ENCODE measurements at regions of chrX and their contacts with region 1.

Region 1: DNA sequence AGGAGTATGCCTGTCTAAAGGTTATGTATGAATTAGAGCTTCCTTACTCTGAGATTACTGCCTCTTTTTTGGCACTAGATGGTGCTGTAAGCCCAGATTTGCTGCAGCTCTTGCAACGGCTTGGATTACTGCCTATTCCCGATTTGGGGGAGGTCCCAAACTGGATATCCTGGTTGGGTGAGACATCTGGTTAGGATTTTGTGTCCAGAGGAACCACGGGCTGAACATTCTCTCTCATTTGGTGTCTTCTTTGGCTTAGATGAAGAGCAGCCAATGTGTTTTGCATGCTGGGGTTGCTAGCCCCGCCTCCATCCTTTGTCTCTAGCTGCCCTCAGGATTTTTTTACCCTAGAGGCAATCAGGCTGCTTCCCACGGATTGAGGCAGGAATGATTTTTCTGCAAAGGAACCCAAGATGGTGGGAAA is 31.9 kb downstream of the F8A1 start:
- DNase-seq: peak; percentile 46
- ATAC-seq: peak; percentile 57
- H3K4me3 Mint-ChIP-seq: peak overlapping the region; percentile 44
- H3K27ac Mint-ChIP-seq: no peak overlapping the region
- H3K4me1 Mint-ChIP-seq: no peaks in the 10 kb centered on the region
- H3K27me3 Mint-ChIP-seq: peaks cover 3% of the 10 kb centered on the region

Region 2: DNA sequence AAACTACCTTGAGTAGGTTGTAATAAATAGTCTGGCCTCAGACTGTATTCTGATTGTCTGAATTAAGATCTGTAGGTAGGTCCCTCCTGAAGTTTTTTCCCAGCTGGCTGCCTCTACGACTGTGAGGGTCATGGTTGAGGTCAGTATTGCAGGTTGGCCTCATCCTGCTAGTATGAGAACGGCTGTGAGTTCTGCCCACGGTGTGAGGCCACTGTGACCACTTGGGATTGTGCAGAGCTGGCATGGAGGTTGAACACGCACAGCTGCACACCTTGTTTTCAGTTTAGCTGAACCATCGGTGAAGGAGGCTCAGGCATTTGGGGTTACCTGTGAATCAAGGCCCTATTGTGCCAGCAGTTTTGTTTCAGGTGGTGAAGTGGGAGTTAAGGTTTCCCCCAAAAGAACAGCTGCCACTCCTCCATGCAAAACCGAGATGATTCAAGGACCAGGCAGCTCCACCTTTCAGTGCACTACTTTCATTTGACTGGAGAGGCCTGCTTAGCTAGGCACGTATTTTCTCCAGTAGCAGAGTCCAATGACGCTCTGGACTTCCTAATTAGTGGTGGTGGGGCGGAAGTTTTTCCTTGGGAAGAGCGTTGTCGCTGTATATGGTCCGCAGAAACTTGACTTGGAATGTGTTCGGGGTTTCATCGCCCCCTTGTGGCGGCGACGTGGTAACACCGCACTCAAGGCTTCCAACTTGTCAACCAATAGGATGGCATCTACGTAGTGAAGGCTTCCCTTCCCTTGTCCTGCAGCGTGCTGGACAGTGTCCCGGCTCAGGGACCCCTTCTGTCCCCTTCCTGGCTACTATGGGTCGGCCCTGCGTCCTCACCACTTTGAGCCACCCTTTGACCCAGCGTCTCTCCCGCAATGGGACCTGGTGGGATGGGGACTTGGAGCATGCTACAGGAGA is 139.1 kb after region 1 on chrX:
- CTCF ChIA-PET with region 1: interaction called, 10 read pairs
- POLR2A ChIA-PET with region 1: no interaction called
- intact Hi-C with region 1: loop called in 1 of 2 experiments (anchors 2 kb)
- DNase-seq: peak; percentile 63
- ATAC-seq: peak; percentile 82
- H3K4me3 Mint-ChIP-seq: peak overlapping the region; percentile 21
- H3K27ac Mint-ChIP-seq: peak overlapping the region; percentile 25
- H3K4me1 Mint-ChIP-seq: peaks cover 33% of the 10 kb centered on the region
- H3K27me3 Mint-ChIP-seq: no peaks in the 10 kb centered on the region

Region 3: DNA sequence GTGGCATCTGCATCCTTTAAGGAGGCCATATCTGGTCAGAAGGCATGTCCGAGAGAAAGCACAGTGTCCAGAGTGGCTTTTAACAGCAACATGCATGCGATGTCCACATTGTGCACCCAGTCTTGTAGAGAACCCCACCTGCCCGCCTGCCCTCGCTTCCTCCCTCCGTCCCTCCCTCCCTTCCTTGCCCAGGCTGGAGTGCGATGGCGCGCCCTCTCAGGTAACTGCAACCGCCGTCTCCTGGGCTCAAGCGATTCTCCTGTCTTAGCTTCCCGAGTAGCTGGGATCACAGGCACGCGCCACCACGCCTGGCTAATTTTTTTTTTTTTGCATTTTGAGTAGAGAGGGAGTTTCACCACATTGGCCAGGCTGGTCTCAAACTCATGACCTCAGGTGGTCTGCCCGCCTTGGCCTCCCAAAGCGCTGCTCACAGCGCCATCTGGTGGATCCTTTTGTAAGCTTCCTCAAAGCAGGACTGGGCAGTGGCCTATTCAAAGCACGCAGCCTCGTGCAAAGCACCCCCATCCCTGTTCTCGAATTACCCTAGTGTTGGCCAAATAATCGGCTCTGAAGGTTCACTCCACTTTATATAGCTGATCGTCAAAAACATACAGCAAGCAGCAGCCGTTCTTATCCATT is 168.2 kb after region 1 on chrX:
- CTCF ChIA-PET with region 1: interaction called, 3 read pairs
- POLR2A ChIA-PET with region 1: interaction called, 4 read pairs
- intact Hi-C with region 1: loop called in 1 of 2 experiments (anchors 1 kb)
- DNase-seq: peak; percentile 63
- ATAC-seq: no peak
- H3K4me3 Mint-ChIP-seq: no peak overlapping the region
- H3K27ac Mint-ChIP-seq: no peak overlapping the region
- H3K4me1 Mint-ChIP-seq: peaks cover 2% of the 10 kb centered on the region
- H3K27me3 Mint-ChIP-seq: no peaks in the 10 kb centered on the region

Region 4: GRCh38 chrX:155132110-155132509 is 214.0 kb after region 1 on chrX:
- CTCF ChIA-PET with region 1: interaction called, 4 read pairs
- POLR2A ChIA-PET with region 1: no interaction called
- intact Hi-C with region 1: loop called in 1 of 2 experiments (anchors 2 kb)
- DNase-seq: no peak
- ATAC-seq: no peak
- H3K4me3 Mint-ChIP-seq: no peak overlapping the region
- H3K27ac Mint-ChIP-seq: no peak overlapping the region
- H3K4me1 Mint-ChIP-seq: no peaks in the 10 kb centered on the region
- H3K27me3 Mint-ChIP-seq: no peaks in the 10 kb centered on the region

Region 5: GRCh38 chrX:155148724-155149537 is 230.9 kb after region 1 on chrX:
- CTCF ChIA-PET with region 1: interaction called, 6 read pairs
- POLR2A ChIA-PET with region 1: no interaction called
- intact Hi-C with region 1: loop called (anchors 1 to 10 kb)
- DNase-seq: peak; percentile 51
- ATAC-seq: peak; percentile 47
- H3K4me3 Mint-ChIP-seq: no peak overlapping the region
- H3K27ac Mint-ChIP-seq: no peak overlapping the region
- H3K4me1 Mint-ChIP-seq: peaks cover 3% of the 10 kb centered on the region
- H3K27me3 Mint-ChIP-seq: no peaks in the 10 kb centered on the region

Region 6: DNA sequence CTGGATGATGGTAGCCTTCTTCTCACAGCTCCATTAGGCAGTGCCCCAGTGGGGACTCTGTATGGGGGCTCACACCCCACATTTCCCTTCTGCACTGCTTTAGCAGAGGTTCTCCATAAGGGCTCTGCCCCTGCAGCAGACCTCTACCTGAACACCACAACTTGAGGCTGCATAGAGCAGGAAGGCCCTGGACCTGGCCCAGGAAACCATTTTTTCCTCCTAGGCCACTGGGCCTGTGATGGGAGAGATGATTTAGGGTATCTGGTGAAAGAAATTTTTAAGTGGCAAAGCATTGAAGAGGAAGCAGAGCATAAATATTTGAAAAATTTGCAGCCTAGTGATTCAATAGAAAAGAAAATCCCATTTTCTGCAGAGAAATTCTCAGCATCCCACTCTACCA is 523.0 kb after region 1 on chrX:
- CTCF ChIA-PET with region 1: no interaction called
- POLR2A ChIA-PET with region 1: no interaction called
- intact Hi-C with region 1: no loop called
- DNase-seq: no peak
- ATAC-seq: no peak
- H3K4me3 Mint-ChIP-seq: no peak overlapping the region
- H3K27ac Mint-ChIP-seq: no peak overlapping the region
- H3K4me1 Mint-ChIP-seq: no peaks in the 10 kb centered on the region
- H3K27me3 Mint-ChIP-seq: no peaks in the 10 kb centered on the region

Region 7: DNA sequence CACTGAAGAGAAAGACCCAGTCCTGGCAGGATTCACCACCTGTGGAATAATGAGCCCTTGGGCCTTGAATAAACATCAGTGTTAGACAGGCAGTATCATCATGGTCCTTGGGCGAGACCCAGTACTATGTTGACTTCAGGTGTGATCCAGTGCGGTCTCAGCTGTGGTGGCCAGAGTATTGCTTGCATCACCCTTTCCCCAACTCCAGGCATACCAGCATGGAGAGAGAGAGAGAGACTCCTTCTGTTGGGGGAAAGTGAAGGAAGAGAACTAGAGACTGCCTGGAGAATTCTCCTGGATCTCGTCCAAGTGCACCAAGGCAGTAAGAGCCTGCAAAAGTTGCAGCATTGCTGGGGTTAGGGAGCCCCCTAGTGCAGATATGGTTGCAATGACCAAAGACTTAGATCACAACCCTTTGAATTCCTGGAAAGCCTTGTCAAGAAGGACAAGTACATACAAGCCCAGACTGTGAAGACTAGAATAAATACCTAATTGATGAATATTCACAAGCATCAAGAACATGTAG is 902.0 kb after region 1 on chrX:
- CTCF ChIA-PET with region 1: no interaction called
- POLR2A ChIA-PET with region 1: no interaction called
- intact Hi-C with region 1: loop called in 1 of 2 experiments (anchors 5 kb)
- DNase-seq: peak; percentile 66
- ATAC-seq: peak; percentile 66
- H3K4me3 Mint-ChIP-seq: no peak overlapping the region
- H3K27ac Mint-ChIP-seq: no peak overlapping the region
- H3K4me1 Mint-ChIP-seq: no peaks in the 10 kb centered on the region
- H3K27me3 Mint-ChIP-seq: peaks cover 7% of the 10 kb centered on the region

Measured in activated CD4-positive, alpha-beta T cell treated with anti-CD3 and anti-CD28 coated beads for 36 hours (primary cell).